ENCODE measurements at regions of chr12 and their contacts with region 1.

Region 1: GRCh38 chr12:53321074-53321814 is at the start of gene AAAS:
- DNase-seq: peak; percentile 84 to 95 (median 91)
- ATAC-seq: peak; percentile 79 to 83 (median 82)
- H3K4me3 ChIP-seq: peak within 1 kb of the TSS; percentile 80 to 95
- H3K4me3 Mint-ChIP-seq: peak within 1 kb of the TSS; percentile 95 to 97 (median 96)
- H3K27ac ChIP-seq: peak within 1 kb of the TSS; percentile 66
- H3K27ac Mint-ChIP-seq: peak within 1 kb of the TSS; percentile 97 to 98
- H3K4me1 ChIP-seq: peaks cover 23 to 52% of the 10 kb centered on the region in 2 experiments
- H3K4me1 Mint-ChIP-seq: peaks cover 40 to 49% (median 42%) of the 10 kb centered on the region in 3 donors
- H3K27me3 ChIP-seq: no peaks in the 10 kb centered on the region
- H3K27me3 Mint-ChIP-seq: no peaks in the 10 kb centered on the region
- total RNA-seq, gene AAAS: 39.3 to 74.6 (median 66.2) TPM

Region 2: DNA sequence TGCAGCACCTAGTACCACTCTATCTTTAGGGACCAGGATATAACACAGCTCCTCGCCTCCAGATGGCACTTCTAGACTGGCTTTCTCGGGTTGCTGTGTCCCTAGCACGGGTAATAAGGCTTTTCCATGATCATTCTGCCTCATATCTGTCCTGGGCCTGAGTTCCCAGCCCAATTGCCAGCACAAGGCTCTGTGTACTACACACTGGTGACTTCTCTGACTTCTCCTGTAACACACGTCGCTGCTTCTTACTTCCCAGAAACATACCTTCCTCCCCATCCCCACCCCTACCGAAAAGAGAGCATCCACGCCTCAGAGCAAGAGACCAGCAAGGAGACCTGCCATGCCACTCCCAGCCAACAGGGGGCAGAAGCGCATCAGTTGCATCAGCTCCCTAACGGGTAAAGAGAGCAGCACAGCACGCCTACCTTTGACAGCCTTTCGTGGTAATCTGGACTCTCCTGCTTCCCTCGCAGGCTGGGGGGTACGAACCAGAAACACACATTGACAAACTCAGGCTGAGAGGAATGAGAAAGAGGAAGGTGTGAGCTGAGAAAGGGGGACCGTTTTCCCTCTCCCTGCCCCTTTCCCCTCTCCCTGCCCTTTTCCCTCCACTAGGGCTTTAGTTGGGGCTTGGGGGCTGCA is 161.9 kb before region 1 on chr12:
- CTCF ChIA-PET with region 1: interaction called, 3 to 16 read pairs
- POLR2A ChIA-PET with region 1: no interaction called
- DNase-seq: peak; percentile 69 to 93 (median 85)
- ATAC-seq: peak; percentile 97 to 99 (median 97)
- H3K4me3 ChIP-seq: no peak overlapping the region
- H3K4me3 Mint-ChIP-seq: no peak overlapping the region
- H3K27ac ChIP-seq: no peak overlapping the region
- H3K27ac Mint-ChIP-seq: peak overlapping the region in 1 of 2 donors; percentile 49
- H3K4me1 ChIP-seq: peaks cover 0 to 9% of the 10 kb centered on the region in 2 experiments
- H3K4me1 Mint-ChIP-seq: peaks cover 4 to 9% (median 5%) of the 10 kb centered on the region in 3 donors
- H3K27me3 ChIP-seq: no peaks in the 10 kb centered on the region
- H3K27me3 Mint-ChIP-seq: no peaks in the 10 kb centered on the region

Region 3: DNA sequence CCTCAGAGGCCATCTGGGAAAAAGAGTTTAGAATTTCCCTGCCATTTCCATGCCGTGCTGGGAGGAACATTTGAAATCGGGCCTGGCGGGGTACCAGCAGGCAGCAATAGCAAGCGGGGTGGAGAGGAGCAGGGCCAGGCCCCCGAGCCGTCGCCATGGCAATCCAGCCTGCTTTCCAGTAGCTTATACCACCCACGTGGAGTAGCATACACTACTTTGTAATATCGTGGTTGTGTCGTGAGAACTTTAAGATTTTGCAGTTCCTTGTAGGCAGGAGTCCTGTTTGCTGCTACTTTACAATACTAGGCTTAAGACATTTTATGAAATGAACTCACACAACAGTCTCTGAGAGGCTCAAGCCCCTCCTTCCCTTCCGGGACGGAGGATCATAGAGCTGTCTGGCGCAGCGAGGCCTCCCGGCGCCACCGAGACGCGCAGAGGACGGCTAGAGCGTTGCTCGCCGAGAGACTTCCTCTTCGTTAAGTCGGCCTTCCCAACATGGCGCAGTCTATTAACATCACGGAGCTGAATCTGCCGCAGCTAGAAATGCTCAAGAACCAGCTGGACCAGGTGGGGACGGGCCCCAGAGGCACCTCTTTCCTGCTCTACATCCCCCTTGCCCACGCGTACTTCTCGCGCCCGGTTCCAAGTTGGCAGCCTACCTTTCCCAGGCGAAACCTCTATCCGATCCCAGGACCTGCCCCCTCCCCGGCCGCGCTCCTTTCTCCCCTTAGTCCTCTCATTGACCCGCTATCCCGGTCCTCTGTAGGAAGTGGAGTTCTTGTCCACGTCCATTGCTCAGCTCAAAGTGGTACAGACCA is 26.0 kb before region 1 on chr12 and contains the start of gene PFDN5:
- CTCF ChIA-PET with region 1: interaction called, 13 to 53 read pairs
- POLR2A ChIA-PET with region 1: interaction called in 1 of 2 experiments, 9 read pairs
- DNase-seq: peak; percentile 64 to 93 (median 86)
- ATAC-seq: peak; percentile 89 to 94 (median 92)
- H3K4me3 ChIP-seq: peak within 1 kb of the TSS; percentile 88 to 96
- H3K4me3 Mint-ChIP-seq: peak within 1 kb of the TSS; percentile 98 to 99 (median 98)
- H3K27ac ChIP-seq: peak within 1 kb of the TSS; percentile 76
- H3K27ac Mint-ChIP-seq: peak within 1 kb of the TSS; percentile 96 to 99
- H3K4me1 ChIP-seq: peaks cover 8 to 40% of the 10 kb centered on the region in 2 experiments
- H3K4me1 Mint-ChIP-seq: peaks cover 49 to 54% (median 51%) of the 10 kb centered on the region in 3 donors
- H3K27me3 ChIP-seq: no peaks in the 10 kb centered on the region
- H3K27me3 Mint-ChIP-seq: no peaks in the 10 kb centered on the region
- total RNA-seq, gene PFDN5: 591 to 643 (median 612) TPM

Region 4: DNA sequence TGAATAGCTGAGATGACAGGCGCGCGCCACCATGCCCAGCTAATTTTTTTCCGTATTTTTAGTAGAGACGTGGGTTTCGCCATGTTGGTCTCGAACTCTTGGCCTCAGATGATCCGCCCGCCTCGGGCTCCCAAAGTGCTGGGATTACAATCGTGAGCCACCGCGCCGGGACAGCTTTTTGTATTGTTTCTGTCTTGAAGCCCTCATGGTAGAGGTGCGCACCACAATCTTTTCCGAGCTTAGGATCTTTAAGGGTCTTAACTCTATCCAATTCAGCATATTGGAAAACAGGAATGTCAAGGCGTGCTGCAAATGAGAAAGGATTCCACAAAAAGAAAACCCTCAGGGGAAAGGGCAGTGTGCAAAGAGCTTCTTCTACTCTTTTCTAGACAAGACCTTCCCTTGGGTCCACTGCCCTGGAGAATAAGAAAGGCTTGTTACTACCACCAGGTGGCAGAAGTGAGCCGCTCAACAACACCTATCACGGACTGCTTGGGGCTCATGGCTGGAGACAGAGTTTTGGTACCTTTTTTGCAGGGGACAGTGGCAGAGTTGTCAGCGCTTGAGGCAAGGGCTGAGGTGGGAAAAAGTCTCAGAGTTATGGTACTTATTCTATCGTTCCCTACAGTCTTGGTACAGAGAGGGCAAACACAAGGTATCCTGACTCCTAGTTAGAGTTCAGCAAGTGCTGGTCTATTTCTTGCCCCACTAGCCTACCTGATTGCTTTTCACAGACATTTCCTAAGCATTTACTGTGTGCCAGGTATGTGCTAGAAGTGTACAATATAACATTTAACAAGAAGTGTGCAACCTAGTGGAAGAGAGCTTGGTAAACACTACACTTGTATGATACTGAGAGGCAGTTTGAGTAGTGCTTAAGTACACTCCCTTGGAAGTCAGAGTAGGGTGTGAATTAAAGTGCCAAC is 31.4 kb after region 1 on chr12:
- CTCF ChIA-PET with region 1: interaction called, 7 to 12 read pairs
- POLR2A ChIA-PET with region 1: no interaction called
- DNase-seq: peak; percentile 60 to 95 (median 78)
- ATAC-seq: peak; percentile 95 to 99 (median 98)
- H3K4me3 ChIP-seq: no peak overlapping the region
- H3K4me3 Mint-ChIP-seq: no peak overlapping the region
- H3K27ac ChIP-seq: no peak overlapping the region
- H3K27ac Mint-ChIP-seq: peak overlapping the region in 1 of 2 donors; percentile 47
- H3K4me1 ChIP-seq: peaks cover 0 to 6% of the 10 kb centered on the region in 2 experiments
- H3K4me1 Mint-ChIP-seq: peaks cover 6 to 7% (median 6%) of the 10 kb centered on the region in 3 donors
- H3K27me3 ChIP-seq: no peaks in the 10 kb centered on the region
- H3K27me3 Mint-ChIP-seq: no peaks in the 10 kb centered on the region

Region 5: GRCh38 chr12:53410951-53411350 is 89.7 kb after region 1 on chr12:
- CTCF ChIA-PET with region 1: no interaction called
- POLR2A ChIA-PET with region 1: no interaction called
- DNase-seq: no peak
- ATAC-seq: no peak
- H3K4me3 ChIP-seq: no peak overlapping the region
- H3K4me3 Mint-ChIP-seq: no peak overlapping the region
- H3K27ac ChIP-seq: no peak overlapping the region
- H3K27ac Mint-ChIP-seq: peak overlapping the region in 1 of 2 donors; percentile 19
- H3K4me1 ChIP-seq: peaks cover 0 to 2% of the 10 kb centered on the region in 2 experiments
- H3K4me1 Mint-ChIP-seq: peaks cover 21 to 34% (median 31%) of the 10 kb centered on the region in 3 donors
- H3K27me3 ChIP-seq: no peaks in the 10 kb centered on the region
- H3K27me3 Mint-ChIP-seq: no peaks in the 10 kb centered on the region

Region 6: DNA sequence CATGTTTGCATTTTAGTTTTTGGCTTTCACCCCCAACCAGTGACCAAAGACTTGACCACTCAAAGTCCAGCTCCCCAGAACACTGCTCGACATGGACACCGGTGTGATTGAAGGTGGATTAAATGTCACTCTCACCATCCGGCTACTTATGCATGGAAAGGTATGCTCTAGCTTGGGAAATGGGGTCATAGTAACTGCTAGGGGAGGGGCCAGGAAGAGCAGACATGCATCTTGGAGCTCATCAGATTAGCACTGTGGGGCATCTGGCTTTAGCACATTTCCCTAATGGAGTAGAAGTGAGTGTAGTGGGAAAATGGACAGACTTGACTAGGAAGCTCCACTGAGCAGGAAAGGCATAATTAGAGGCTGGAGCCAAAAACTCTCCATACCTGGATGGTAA is 133.5 kb after region 1 on chr12:
- CTCF ChIA-PET with region 1: no interaction called
- POLR2A ChIA-PET with region 1: interaction called in 1 of 2 experiments, 10 read pairs
- DNase-seq: no peak
- ATAC-seq: no peak
- H3K4me3 ChIP-seq: no peak overlapping the region
- H3K4me3 Mint-ChIP-seq: peak overlapping the region; percentile 56 to 97 (median 89)
- H3K27ac ChIP-seq: no peak overlapping the region
- H3K27ac Mint-ChIP-seq: no peak overlapping the region
- H3K4me1 ChIP-seq: peaks cover 13 to 17% of the 10 kb centered on the region in 2 experiments
- H3K4me1 Mint-ChIP-seq: peaks cover 35 to 44% (median 41%) of the 10 kb centered on the region in 3 donors
- H3K27me3 ChIP-seq: no peaks in the 10 kb centered on the region
- H3K27me3 Mint-ChIP-seq: no peaks in the 10 kb centered on the region

Region 7: DNA sequence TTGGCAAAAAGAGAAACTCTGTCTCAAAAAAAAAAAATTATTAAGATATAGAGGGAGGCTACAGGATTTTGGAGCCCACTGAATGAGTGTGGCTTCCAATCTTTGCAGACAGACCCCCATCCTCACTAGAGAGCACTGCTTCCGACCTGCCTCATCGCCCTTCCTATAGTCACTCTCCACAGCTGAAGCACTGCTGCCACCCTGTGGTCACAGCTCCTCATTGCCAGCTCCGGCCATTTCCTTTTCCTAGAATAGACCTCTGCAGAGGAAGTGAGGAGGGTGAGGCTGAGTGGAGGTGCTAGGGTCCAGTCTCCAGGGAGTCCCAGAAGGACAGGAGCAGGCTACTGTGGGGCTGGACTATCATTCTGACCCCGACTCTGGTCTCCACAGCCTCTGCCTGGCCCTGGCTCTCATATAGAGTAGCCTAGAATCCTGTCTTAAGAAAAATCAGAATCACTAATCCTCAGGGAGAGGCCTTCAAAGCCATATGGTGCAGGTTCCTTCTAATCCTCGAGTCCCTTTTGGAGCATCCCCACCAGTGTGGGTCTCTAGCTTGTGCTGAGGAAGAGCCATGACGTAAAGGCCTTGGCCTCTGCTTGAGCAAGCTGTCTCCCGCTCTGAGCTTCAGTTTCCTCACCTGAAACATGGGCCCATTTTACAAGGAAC is 187.4 kb after region 1 on chr12:
- CTCF ChIA-PET with region 1: interaction called, 4 to 10 read pairs
- POLR2A ChIA-PET with region 1: no interaction called
- DNase-seq: peak; percentile 40 to 88 (median 73)
- ATAC-seq: peak; percentile 91 to 97 (median 96)
- H3K4me3 ChIP-seq: no peak overlapping the region
- H3K4me3 Mint-ChIP-seq: no peak overlapping the region
- H3K27ac ChIP-seq: peak overlapping the region; percentile 36
- H3K27ac Mint-ChIP-seq: peak overlapping the region; percentile 14 to 45
- H3K4me1 ChIP-seq: peaks cover 0 to 9% of the 10 kb centered on the region in 2 experiments
- H3K4me1 Mint-ChIP-seq: peaks cover 9 to 12% (median 11%) of the 10 kb centered on the region in 3 donors
- H3K27me3 ChIP-seq: no peaks in the 10 kb centered on the region
- H3K27me3 Mint-ChIP-seq: no peaks in the 10 kb centered on the region